Heart left ventricle (tissue), 16 donors: ENCODE measurements at regions of chr7 and their contacts with region 1.

Region 1: GRCh38 chr7:44748045-44748947 is at the start of gene ZMIZ2:
- DNase-seq: peak; percentile 94 to 98 (median 96)
- ATAC-seq: peak; percentile 95 to 99 (median 98)
- H3K4me3 ChIP-seq: peak within 1 kb of the TSS; percentile 83 to 98 (median 92)
- H3K27ac ChIP-seq: peak within 1 kb of the TSS; percentile 92 to 100 (median 96)
- H3K4me1 ChIP-seq: peaks cover 6 to 49% (median 28%) of the 10 kb centered on the region in 12 donors
- H3K27me3 ChIP-seq: no peaks in the 10 kb centered on the region
- CTCF ChIP-seq: no peak
- POLR2A ChIP-seq: peak; percentile 12 to 80
- total RNA-seq, gene ZMIZ2: 18.5 to 71.5 (median 46.5) TPM

Region 2: GRCh38 chr7:44587843-44588711 is 160.2 kb before region 1 on chr7:
- intact Hi-C with region 1: loop called in 3 of 10 experiments (anchors 5 to 10 kb)
- DNase-seq: peak in 1 of 5 donors; percentile 53
- ATAC-seq: peak in 3 of 4 donors; percentile 73 to 81 (median 74)
- H3K4me3 ChIP-seq: no peak overlapping the region
- H3K27ac ChIP-seq: no peak overlapping the region
- H3K4me1 ChIP-seq: peaks cover 0 to 8% (median 2%) of the 10 kb centered on the region in 12 donors
- H3K27me3 ChIP-seq: no peaks in the 10 kb centered on the region
- CTCF ChIP-seq: peak; percentile 41 to 74 (median 67)
- POLR2A ChIP-seq: no peak

Region 3: DNA sequence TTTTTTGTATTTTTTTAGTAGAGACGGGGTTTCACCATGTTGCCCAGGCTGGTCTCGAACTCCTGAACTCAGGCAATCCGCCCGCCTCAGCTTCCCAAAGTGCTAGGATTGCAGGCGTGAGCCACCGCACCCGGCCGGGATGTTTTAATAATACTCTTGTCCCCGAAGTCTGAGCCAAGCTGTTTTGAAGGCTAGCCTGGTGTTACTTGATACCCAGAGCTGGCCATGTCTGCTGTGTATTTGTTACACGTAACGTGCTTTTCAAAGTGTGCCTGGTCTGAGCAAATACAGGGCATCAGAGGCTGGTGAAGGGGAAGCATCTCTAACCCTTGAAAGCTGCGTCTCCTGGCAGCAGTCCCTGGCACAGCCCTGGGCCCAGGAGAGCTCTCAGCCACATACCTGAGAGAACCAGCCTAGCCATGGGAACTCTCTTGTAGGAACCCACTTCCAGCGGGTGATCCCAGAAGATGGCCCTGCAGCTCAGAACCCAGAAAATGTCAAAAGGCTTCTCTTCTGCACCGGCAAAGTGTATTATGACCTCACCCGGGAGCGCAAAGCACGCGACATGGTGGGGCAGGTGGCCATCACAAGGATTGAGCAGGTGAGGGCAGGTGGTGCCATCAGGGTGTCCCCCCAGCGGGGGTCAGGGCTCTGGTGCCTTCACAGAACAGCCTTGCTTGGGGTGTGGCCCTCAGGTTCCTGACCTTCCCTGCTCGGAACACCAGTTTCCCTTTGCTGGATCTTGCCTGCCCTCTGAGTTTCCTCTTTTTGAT is 41.3 kb before region 1 on chr7:
- intact Hi-C with region 1: loop called in 2 of 10 experiments (anchors 5 to 10 kb)
- DNase-seq: peak in 1 of 5 donors; percentile 48
- ATAC-seq: peak in 3 of 4 donors; percentile 42 to 74 (median 59)
- H3K4me3 ChIP-seq: no peak overlapping the region
- H3K27ac ChIP-seq: peak overlapping the region in 5 of 12 donors; percentile 15 to 69 (median 26)
- H3K4me1 ChIP-seq: peaks cover 0 to 21% (median 0%) of the 10 kb centered on the region in 12 donors
- H3K27me3 ChIP-seq: no peaks in the 10 kb centered on the region
- CTCF ChIP-seq: no peak
- POLR2A ChIP-seq: no peak

Region 4: GRCh38 chr7:44791278-44792219 is 43.3 kb after region 1 on chr7:
- intact Hi-C with region 1: loop called in 8 of 10 experiments (anchors 2 to 5 kb)
- DNase-seq: no peak
- ATAC-seq: no peak
- H3K4me3 ChIP-seq: no peak overlapping the region
- H3K27ac ChIP-seq: no peak overlapping the region
- H3K4me1 ChIP-seq: peaks cover 0 to 9% (median 4%) of the 10 kb centered on the region in 12 donors
- H3K27me3 ChIP-seq: no peaks in the 10 kb centered on the region
- CTCF ChIP-seq: no peak
- POLR2A ChIP-seq: no peak

Region 5: DNA sequence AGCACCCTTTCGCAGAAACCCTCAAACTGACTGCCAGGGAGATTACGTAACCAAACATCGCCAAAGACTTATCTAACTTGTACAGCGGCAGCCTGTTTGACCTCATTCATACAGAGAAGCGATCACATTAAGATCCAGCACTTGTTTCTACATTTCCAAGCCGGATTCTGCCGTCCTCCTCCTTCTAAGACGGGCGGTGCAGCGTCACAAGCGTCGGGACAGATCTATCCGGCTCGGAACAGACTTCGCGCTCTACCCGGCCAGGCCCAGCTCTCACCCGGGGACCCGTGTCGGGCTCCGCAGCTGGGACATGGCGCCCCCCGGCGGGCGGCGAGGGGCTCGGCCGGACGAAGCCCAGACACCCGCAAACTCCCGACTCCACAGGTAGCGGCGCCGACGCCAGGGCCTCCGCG is 99.2 kb after region 1 on chr7:
- intact Hi-C with region 1: loop called in 3 of 10 experiments (anchors 2 to 10 kb)
- DNase-seq: peak; percentile 89 to 95 (median 89)
- ATAC-seq: peak; percentile 23 to 87 (median 75)
- H3K4me3 ChIP-seq: peak overlapping the region; percentile 52 to 85 (median 70)
- H3K27ac ChIP-seq: peak overlapping the region; percentile 70 to 99 (median 97)
- H3K4me1 ChIP-seq: peaks cover 0 to 46% (median 38%) of the 10 kb centered on the region in 12 donors
- H3K27me3 ChIP-seq: no peaks in the 10 kb centered on the region
- CTCF ChIP-seq: peak; percentile 80 to 99 (median 94)
- POLR2A ChIP-seq: no peak